Activated T-helper 1 cell treated with anti-CD3 and anti-CD28 coated beads, Interleukin-12 subunit alpha, Interleukin-12 subunit beta, Interleukin-2, Interleukin-4 antibody, amounts not matched to agents 30 ng/mL and 10 ng/mL and 1 ng/mL, durations not matched to agents 14 hours and 24 hours and 36 hours (primary cell): ENCODE measurements at regions of chr17 and their contacts with region 1.

Region 1: GRCh38 chr17:75205037-75205792 is at the start of gene NUP85:
- DNase-seq: peak; percentile 89
- H3K4me3 Mint-ChIP-seq: peak within 1 kb of the TSS; percentile 98
- H3K27ac Mint-ChIP-seq: peak within 1 kb of the TSS; percentile 99
- H3K4me1 Mint-ChIP-seq: peaks cover 23% of the 10 kb centered on the region
- H3K27me3 Mint-ChIP-seq: no peaks in the 10 kb centered on the region
- total RNA-seq, gene NUP85: 122 and 129 TPM in 2 replicates

Region 2: DNA sequence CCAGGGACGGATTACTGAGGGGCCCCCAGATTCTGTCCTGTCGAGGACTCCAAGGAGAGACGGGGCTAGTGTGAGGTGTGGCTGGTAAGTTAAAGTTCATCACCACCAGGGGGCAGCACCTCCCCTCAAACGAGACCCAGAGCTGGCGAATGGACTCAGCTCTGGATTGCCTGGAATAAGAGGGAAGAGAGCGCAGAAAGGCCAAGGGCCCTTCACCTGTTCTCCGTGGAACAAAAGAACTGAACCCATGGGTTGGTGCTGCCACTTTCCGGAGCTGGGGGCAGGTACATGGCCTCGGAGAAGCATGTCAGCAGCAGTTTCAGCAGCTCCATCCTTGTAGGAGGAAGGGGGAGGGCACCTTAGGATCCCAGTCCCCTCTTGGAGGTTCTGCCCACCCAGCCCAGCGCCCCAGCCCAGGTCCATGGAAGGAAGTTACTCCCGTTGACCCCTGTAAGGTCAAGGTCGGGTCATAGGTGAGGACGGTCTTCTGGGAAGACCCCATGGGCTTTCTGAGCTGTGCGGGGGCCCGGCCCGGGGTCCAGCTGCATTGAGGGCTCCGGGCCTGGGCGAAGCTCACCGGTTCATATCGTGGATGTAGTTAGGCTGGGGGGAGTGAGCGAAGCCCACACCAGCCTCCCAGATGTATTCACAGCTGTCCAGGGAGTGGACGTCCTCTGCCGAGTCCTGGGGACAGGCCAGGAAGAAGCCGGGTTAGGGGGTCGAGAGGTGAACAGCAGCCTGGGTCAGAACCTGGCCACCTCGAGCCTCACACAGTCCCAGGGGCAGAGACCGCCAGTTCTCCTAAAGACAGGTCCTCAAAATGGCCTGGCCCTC is 243.3 kb before region 1 on chr17:
- intact Hi-C with region 1: loop called (anchors 1 kb)
- DNase-seq: peak; percentile 70
- H3K4me3 Mint-ChIP-seq: no peak overlapping the region
- H3K27ac Mint-ChIP-seq: no peak overlapping the region
- H3K4me1 Mint-ChIP-seq: no peaks in the 10 kb centered on the region
- H3K27me3 Mint-ChIP-seq: peaks cover 6% of the 10 kb centered on the region

Region 3: DNA sequence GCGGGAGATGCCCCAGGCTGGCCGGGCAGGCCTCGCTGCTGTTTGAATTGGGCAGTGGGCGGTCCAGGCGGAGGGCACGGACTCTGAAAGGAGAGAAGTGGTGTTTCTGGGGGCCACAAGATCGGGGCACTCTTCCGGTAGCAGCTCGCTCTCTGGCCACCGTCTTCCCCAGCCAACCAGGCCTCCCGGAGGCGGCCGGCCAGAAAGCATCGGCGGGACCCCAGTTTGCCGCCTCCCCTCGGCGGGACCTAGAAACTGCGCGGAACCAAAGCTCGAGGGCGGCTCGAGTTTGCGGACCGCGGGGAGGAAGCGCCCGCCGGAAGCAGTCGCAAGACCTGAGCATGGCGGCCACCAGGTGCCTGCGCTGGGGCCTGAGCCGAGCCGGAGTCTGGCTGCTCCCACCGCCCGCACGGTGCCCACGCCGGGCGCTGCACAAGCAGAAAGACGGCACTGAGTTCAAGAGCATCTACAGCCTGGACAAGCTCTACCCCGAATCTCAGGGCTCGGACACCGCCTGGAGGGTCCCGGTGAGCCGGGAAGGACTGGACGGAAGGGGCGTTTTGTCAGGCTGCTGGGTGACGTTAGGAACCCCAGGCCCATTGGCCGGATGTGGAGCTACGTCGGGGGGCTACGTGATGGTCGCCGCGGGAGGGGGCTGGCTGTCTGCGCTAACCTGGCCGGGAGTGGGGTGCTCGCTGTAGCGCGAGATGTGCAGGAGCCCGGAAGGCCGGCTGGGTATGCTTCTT is 192.7 kb before region 1 on chr17 and contains the start of gene MRPL58:
- intact Hi-C with region 1: loop called (anchors 1 kb)
- DNase-seq: peak; percentile 75
- H3K4me3 Mint-ChIP-seq: peak within 1 kb of the TSS; percentile 95
- H3K27ac Mint-ChIP-seq: peak within 1 kb of the TSS; percentile 88
- H3K4me1 Mint-ChIP-seq: peaks cover 17% of the 10 kb centered on the region
- H3K27me3 Mint-ChIP-seq: no peaks in the 10 kb centered on the region
- total RNA-seq, gene MRPL58: 77.8 and 78.1 TPM in 2 replicates

Region 4: GRCh38 chr17:75154195-75155106 is 50.8 kb before region 1 on chr17 and contains the start of gene JPT1:
- intact Hi-C with region 1: loop called (anchors 1 kb)
- DNase-seq: peak; percentile 97
- H3K4me3 Mint-ChIP-seq: peak within 1 kb of the TSS; percentile 97
- H3K27ac Mint-ChIP-seq: peak within 1 kb of the TSS; percentile 93
- H3K4me1 Mint-ChIP-seq: peaks cover 34% of the 10 kb centered on the region
- H3K27me3 Mint-ChIP-seq: no peaks in the 10 kb centered on the region
- total RNA-seq, gene JPT1: 271 and 299 TPM in 2 replicates

Region 5: DNA sequence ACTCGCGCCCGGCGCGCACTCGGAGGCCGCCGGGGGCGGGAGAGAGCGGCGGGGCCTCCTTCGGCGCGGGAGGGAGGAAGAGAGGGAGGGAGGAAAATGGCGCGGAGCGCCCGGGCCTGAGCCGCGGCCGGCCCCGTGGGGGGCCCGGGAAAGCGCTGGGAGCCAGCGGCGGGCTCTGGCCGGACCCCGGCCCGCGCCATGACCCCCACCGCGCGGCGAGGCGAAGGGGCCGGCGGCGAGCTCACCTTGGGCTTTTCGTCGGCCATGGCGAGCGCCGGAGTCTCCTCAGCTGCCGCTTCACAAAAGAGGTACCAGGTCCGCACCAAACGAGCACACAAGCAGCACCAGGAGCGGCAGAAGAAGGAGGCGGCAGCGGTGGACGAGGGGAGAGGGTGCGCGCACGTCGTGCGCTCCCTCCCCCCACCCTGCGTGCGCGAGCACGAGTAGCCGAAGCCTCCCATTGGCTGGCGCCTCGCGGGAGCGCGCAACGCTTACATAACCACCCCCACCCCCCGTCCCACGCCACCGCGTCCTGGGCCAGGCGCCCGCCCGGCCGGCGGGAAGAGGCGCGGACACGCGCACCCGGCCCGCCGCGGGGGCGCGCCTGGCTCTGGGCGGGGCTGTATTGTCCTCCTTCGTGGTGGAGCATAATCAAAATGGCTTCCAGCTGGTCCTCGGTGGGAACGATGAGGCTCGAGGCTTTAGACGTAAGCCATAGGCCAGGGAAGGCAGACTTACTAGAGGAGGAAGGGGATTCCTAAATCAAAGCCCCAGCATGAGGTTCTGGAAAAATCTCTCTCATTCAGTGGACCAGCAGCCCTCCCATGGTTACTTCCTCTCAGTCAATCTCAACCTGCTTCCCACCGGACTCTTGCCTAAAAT is 22.4 kb before region 1 on chr17 and contains the start of gene SUMO2:
- intact Hi-C with region 1: loop called (anchors 1 kb)
- DNase-seq: peak; percentile 93
- H3K4me3 Mint-ChIP-seq: peak within 1 kb of the TSS; percentile 99
- H3K27ac Mint-ChIP-seq: peak within 1 kb of the TSS; percentile 98
- H3K4me1 Mint-ChIP-seq: peaks cover 38% of the 10 kb centered on the region
- H3K27me3 Mint-ChIP-seq: no peaks in the 10 kb centered on the region
- total RNA-seq, gene SUMO2: 649 and 656 TPM in 2 replicates

Region 6: DNA sequence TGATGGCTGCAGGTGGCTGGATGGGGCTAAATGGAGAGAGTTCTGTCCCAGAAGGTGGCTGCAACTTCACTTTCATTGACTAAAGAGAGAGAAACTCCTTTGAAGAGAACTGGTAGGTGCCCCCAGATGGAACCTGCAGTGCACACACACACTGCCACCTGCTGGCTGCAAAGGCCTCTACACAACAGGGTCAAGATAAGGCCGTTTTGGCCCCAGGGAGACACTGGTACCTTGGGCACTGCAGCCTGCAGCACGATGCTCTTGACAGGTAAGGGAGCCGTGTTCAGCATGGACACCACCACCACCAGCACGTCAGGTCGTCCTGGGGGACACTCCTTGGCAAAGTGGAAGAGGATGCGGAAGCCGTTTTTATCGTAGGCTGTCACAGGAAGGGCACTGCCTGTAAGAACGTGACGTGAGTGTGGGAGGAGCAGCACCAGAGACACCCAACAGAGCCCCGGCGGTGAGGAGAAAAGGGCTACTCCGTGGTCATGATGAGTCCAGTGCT is 33.5 kb after region 1 on chr17:
- intact Hi-C with region 1: loop called (anchors 1 kb)
- DNase-seq: peak; percentile 35
- H3K4me3 Mint-ChIP-seq: peak overlapping the region; percentile 38
- H3K27ac Mint-ChIP-seq: peak overlapping the region; percentile 76
- H3K4me1 Mint-ChIP-seq: peaks cover 35% of the 10 kb centered on the region
- H3K27me3 Mint-ChIP-seq: no peaks in the 10 kb centered on the region

Region 7: GRCh38 chr17:75277664-75278071 is 72.5 kb after region 1 on chr17:
- intact Hi-C with region 1: no loop called
- DNase-seq: no peak
- H3K4me3 Mint-ChIP-seq: no peak overlapping the region
- H3K27ac Mint-ChIP-seq: no peak overlapping the region
- H3K4me1 Mint-ChIP-seq: peaks cover 15% of the 10 kb centered on the region
- H3K27me3 Mint-ChIP-seq: no peaks in the 10 kb centered on the region

Region 8: DNA sequence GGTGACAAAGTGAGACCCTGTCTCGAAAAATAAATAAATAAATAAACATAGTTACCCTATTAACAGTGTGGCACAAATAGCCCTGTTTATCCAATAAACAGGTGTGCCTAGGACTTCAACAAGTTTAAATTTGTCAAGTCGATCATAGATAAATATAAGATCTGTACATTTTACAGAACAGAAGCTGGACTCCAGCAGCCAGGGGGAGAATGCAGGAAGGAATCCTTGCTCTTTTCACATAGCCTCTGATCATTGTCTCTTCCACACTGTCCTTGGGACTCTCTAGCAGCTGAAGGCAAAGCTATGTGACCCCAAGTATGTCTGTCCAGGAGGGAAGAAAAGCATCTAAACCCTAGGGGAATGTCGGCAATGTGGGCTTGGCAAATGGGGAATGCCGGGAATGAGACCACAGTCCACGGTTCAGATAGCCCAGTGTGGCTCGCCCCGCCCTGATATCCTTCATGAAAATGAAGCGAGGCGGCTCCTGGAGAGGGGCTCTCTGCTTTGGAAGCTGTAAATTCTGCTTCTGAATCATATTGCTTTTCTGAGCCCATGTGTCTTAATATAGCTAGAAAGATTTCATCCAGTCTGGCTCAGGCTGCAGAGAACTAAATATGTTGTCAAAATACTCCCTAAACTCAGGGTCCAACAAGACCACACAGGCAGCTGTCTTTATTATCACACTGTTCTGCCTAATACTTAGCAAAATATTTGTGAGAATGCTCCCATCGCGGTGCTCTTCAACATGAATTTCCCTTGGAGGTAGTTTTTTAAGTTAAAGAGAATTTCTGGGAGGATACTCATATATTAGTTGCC is 225.2 kb after region 1 on chr17:
- intact Hi-C with region 1: no loop called
- DNase-seq: no peak
- H3K4me3 Mint-ChIP-seq: no peak overlapping the region
- H3K27ac Mint-ChIP-seq: no peak overlapping the region
- H3K4me1 Mint-ChIP-seq: peaks cover 9% of the 10 kb centered on the region
- H3K27me3 Mint-ChIP-seq: peaks cover 20% of the 10 kb centered on the region